ENCODE measurements at regions of chr5 and their contacts with region 1.

Region 1: DNA sequence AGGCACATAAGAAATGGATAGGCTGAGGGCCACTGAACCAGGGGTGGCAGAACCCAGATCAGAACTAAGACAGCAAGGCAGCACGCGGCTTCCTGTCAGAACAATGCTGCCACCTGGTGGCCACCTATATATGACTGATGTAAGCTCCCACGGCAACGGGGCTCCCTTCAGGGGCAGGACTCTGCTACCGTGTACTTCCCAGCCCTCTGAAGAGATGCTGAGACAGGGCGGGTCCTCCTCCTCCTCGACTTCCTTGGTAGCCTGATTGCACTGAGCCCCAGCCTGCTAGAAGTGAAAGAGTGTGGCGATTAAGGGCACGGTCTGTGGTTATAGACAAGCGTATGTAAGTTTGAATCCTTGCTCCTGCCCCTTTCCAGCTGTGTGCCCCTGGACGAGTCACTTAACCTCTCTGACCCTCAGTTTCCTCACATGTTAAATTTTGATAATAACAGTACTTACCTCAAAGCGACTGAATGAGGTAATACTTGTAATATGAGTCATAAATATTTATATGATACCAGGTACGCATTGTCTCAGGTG is 13.3 kb downstream of the RPS14 start:
- DNase-seq: peak; percentile 77 to 90
- ATAC-seq: peak; percentile 79 to 90 (median 90)
- H3K4me3 ChIP-seq: no peak overlapping the region
- H3K27ac ChIP-seq: no peak overlapping the region
- H3K4me1 ChIP-seq: peaks cover 0 to 20% (median 9%) of the 10 kb centered on the region in 9 donors
- H3K27me3 ChIP-seq: no peaks in the 10 kb centered on the region
- CTCF ChIP-seq: peak; percentile 81 to 93 (median 90)

Region 2: DNA sequence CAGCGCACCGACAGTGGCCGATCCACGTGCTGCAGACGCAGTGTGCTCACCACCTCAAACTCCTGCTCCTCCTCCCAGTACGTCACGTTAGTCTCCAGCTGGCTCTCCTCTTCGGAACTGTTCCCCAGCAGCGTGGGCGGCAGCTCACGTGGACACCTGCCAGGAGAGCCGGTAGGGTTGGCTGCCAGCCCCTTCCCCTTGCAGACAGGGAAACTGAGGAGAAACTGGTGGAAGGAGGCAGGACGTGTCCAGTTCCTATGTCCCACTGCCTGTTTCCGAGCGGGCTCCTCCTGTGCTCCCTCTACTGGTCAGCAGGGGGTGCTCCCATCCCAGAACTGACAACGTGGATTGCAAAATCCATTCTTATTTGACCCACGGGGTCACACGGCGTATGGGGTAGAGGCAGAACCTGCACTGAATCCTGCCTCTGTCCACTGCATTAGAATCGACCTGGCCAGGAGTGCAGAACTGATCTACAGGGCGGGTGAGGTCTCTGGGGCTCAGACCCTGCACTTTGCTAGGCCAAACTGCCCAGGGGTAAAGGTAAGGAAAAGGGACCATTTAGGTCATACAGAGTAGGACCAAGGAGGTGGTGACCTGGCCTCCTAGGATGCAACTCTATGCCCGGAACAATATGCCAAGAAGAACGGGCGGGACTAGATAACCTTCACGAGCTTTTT is 306.3 kb before region 1 on chr5:
- intact Hi-C with region 1: loop called in 4 of 10 experiments (anchors 10 kb)
- DNase-seq: peak; percentile 71 to 76
- ATAC-seq: peak; percentile 35 to 81 (median 79)
- H3K4me3 ChIP-seq: peak overlapping the region in 4 of 10 donors; percentile 9 to 30 (median 26)
- H3K27ac ChIP-seq: peak overlapping the region in 6 of 10 donors; percentile 16 to 92 (median 34)
- H3K4me1 ChIP-seq: peaks cover 2 to 49% (median 33%) of the 10 kb centered on the region in 9 donors
- H3K27me3 ChIP-seq: no peaks in the 10 kb centered on the region
- CTCF ChIP-seq: peak; percentile 86 to 97 (median 94)

Region 3: DNA sequence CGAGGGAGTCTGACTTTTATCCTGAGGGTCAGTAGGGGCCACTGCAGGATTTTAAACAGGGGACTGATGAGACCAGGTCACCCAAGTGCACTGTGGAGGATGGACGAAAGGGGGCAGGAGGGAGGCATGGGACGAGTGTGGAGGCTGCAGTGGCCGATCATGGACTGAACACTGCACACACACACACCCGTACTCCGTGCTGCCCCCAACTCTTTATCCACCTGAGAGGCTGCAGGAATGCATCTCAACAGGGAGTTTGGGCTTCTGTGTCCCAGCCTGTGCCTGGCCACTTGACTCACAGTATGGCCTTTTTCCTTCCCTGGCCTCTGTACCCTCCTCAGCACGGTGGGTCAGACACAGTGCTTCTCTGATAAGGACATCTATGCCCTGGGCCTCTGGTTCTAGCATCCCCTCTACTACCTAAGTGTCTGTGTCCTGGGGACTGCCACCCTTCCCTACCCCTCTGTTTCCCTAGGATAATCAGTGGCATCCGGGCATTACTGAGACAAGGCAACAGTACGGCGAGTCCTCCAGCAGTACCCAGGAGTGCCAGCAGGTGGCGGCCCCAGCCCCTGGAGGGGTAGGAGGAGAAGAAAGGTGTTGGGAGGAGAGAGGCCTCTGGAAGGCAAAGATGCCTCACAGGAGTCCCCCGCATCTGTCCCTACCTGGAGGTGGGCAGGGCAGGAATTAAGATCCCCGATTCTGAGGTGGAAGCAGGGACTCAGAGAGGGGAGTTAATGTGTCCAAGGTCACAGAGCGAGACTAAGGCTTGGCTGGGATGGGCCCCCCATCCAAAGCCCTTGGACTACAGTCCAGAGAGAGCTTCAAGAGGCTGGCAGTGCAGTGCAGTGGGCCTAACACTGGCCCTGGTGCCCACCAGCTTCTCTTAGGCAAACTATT is 274.7 kb before region 1 on chr5:
- intact Hi-C with region 1: loop called in 2 of 10 experiments (anchors 1 to 10 kb)
- DNase-seq: peak; percentile 85 to 91
- ATAC-seq: peak; percentile 24 to 66 (median 55)
- H3K4me3 ChIP-seq: no peak overlapping the region
- H3K27ac ChIP-seq: peak overlapping the region in 9 of 10 donors; percentile 73 to 92 (median 86)
- H3K4me1 ChIP-seq: peaks cover 16 to 89% (median 67%) of the 10 kb centered on the region in 9 donors
- H3K27me3 ChIP-seq: peaks cover 0 to 12% (median 4%) of the 10 kb centered on the region in 7 donors
- CTCF ChIP-seq: peak; percentile 75 to 95 (median 90)

Region 4: DNA sequence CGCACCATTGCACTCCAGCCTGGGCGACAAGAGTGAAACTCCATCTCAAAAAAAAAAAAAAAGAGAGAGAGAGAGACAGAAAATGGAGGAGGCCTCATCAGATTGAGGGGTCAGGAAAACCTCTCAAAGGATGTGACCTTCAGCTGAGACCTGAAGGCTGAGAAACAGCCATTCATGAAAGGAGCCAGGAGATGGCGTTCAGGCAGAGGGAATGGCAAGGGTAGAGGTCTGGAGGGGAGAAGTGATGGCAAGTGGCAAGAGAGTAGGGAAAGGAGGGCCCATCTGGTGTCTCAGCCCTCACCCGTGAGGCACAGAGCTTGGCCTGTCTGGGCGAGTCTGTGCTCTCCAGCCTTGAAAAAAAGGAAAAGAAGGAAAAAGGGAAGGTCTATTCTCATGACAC is 163.7 kb before region 1 on chr5:
- intact Hi-C with region 1: loop called in 5 of 10 experiments (anchors 10 kb)
- DNase-seq: no peak
- ATAC-seq: peak in 4 of 8 donors; percentile 10 to 65 (median 36)
- H3K4me3 ChIP-seq: no peak overlapping the region
- H3K27ac ChIP-seq: no peak overlapping the region
- H3K4me1 ChIP-seq: no peaks in the 10 kb centered on the region
- H3K27me3 ChIP-seq: no peaks in the 10 kb centered on the region
- CTCF ChIP-seq: peak in 6 of 9 donors; percentile 27 to 41 (median 30)

Region 5: GRCh38 chr5:150357326-150358260 is 78.6 kb before region 1 on chr5 and contains the start of gene TCOF1:
- intact Hi-C with region 1: loop called in 1 of 10 experiments (anchors 10 kb)
- DNase-seq: peak; percentile 96 to 98
- ATAC-seq: peak; percentile 97 to 100 (median 99)
- H3K4me3 ChIP-seq: peak within 1 kb of the TSS; percentile 72 to 99 (median 92)
- H3K27ac ChIP-seq: peak within 1 kb of the TSS in 9 of 10 donors; percentile 49 to 87 (median 62)
- H3K4me1 ChIP-seq: peaks cover 0 to 25% (median 16%) of the 10 kb centered on the region in 9 donors
- H3K27me3 ChIP-seq: no peaks in the 10 kb centered on the region
- CTCF ChIP-seq: no peak
- total RNA-seq, gene TCOF1: 12.4 to 21.3 (median 14.3) TPM

Region 6: GRCh38 chr5:150398722-150399523 is 37.3 kb before region 1 on chr5:
- intact Hi-C with region 1: loop called in 7 of 10 experiments (anchors 5 kb)
- DNase-seq: no peak
- ATAC-seq: peak in 1 of 8 donors; percentile 5
- H3K4me3 ChIP-seq: no peak overlapping the region
- H3K27ac ChIP-seq: no peak overlapping the region
- H3K4me1 ChIP-seq: peaks cover 0 to 15% (median 2%) of the 10 kb centered on the region in 9 donors
- H3K27me3 ChIP-seq: no peaks in the 10 kb centered on the region
- CTCF ChIP-seq: peak in 4 of 9 donors; percentile 6 to 39 (median 24)

Measured in heart right ventricle (tissue), 16 donors.